Caco-2 (cell line): ENCODE measurements at regions of chr16 and their contacts with region 1.

Region 1: DNA sequence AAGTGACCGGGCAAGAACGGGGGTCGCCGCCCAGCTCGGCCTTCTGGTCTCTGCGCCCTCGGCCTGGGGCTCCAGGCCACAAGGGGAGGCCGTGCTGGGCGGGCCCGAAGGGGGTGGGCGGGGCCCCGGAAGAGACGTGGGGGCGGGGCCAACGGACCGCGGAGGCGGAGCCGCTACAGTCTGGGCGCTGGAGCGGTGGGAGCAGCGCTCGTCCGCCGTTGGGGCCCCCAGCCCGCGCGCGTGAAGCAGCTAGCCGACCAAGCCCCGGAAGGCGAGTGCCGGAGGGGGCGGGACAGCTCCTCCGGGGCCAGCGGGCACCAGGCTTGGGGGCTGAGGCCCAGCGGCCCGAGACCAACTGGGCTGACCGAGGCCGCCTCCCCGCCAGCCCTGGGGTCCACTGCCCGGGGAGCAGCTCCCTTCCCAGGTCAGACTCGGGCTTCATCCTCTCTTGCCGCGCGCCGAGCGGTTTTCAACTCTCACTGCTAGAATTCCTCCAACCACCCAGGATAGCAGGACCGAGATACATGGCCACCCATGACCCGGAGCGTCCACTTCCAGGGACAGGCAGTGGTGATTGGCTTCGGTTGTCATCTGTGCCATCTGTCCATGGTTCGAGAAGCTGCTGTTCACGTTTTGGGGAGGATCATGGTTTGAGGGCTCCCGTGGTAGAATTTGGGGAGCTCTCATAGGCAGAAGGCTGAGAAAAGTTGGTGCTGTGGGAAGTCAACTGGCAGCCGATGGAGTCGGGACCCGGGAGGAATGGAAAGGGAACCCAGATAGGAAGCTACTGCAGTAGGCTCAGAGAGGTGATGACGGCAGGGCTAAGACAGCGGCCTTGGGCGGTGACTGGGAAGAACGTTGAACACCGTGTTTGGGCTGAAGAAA is 44.6 kb upstream of the LCMT1 start:
- DNase-seq: peak; percentile 80 to 86
- H3K4me3 ChIP-seq: peak overlapping the region; percentile 54
- H3K4me3 Mint-ChIP-seq: peak overlapping the region; percentile 96
- H3K27ac Mint-ChIP-seq: peak overlapping the region; percentile 91
- H3K4me1 ChIP-seq: peaks cover 24% of the 10 kb centered on the region
- H3K4me1 Mint-ChIP-seq: peaks cover 18% of the 10 kb centered on the region
- H3K27me3 ChIP-seq: no peaks in the 10 kb centered on the region
- H3K27me3 Mint-ChIP-seq: no peaks in the 10 kb centered on the region
- CTCF ChIP-seq: no peak

Region 2: DNA sequence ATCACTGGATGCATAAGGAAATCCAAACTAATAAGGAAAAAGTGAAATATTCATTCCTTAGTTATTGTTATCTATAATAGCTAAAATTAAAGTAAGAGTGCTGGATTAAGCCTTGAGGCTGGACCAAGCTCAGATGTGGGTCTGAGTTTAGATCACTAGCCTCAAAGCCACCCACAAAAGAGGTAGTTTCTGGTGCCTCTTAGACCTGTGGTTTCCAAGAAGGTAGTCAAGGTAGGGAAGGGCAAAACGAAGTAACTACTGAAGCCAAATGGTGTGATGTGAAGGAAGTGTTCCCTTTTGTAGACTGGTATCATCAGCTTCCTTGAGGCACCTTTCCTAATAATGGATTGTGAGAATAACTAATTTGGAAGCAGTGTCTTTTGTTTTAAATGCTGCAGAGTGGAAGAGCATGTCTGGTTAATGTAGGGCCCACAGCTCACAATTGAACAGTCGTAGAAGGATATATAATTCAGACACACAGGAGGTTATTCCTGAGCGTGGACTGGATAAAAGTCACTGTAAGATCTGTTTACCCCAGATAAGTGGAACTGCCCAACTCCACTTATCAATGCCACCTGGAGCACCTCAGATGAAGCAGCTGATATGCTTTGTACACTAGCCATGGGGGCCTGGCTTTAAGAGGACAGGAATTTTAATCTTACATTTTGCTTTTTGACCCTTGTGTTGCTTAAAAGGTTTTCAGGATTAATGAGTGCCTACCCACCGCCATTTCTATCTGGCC is 12.8 kb after region 1 on chr16:
- CTCF ChIA-PET with region 1: interaction called, 4 read pairs
- POLR2A ChIA-PET with region 1: interaction called, 10 read pairs
- intact Hi-C with region 1: no loop called
- DNase-seq: no peak
- H3K4me3 ChIP-seq: no peak overlapping the region
- H3K4me3 Mint-ChIP-seq: no peak overlapping the region
- H3K27ac Mint-ChIP-seq: no peak overlapping the region
- H3K4me1 ChIP-seq: peaks cover 24% of the 10 kb centered on the region
- H3K4me1 Mint-ChIP-seq: peaks cover 8% of the 10 kb centered on the region
- H3K27me3 ChIP-seq: no peaks in the 10 kb centered on the region
- H3K27me3 Mint-ChIP-seq: no peaks in the 10 kb centered on the region
- CTCF ChIP-seq: no peak

Region 3: DNA sequence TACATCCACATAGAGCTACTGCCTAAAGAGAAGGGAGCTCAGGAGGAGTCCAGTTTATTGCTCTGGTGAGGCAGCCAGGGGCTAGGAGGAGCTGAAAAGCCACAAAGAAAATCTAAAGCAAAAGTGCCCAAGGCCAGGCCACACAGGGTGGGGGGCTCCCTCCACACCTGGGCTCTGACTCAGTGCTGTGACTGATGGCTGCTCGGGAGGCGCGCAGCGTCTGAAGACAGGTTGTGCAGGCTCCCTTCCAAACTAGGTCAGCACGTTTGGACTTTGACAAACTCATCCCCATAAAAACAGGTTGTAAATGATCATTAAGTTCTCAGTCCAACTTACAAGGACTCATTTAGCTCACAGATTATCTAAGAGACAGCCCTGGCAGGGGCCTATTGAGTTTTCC is 22.4 kb after region 1 on chr16:
- CTCF ChIA-PET with region 1: interaction called, 5 read pairs
- POLR2A ChIA-PET with region 1: interaction called, 20 read pairs
- intact Hi-C with region 1: no loop called
- DNase-seq: peak; percentile 74 to 81
- H3K4me3 ChIP-seq: no peak overlapping the region
- H3K4me3 Mint-ChIP-seq: peak overlapping the region; percentile 37
- H3K27ac Mint-ChIP-seq: peak overlapping the region; percentile 62
- H3K4me1 ChIP-seq: peaks cover 10% of the 10 kb centered on the region
- H3K4me1 Mint-ChIP-seq: peaks cover 7% of the 10 kb centered on the region
- H3K27me3 ChIP-seq: no peaks in the 10 kb centered on the region
- H3K27me3 Mint-ChIP-seq: no peaks in the 10 kb centered on the region
- CTCF ChIP-seq: no peak

Region 4: GRCh38 chr16:25100511-25100910 is 33.5 kb after region 1 on chr16:
- CTCF ChIA-PET with region 1: no interaction called
- POLR2A ChIA-PET with region 1: no interaction called
- intact Hi-C with region 1: no loop called
- DNase-seq: no peak
- H3K4me3 ChIP-seq: no peak overlapping the region
- H3K4me3 Mint-ChIP-seq: no peak overlapping the region
- H3K27ac Mint-ChIP-seq: no peak overlapping the region
- H3K4me1 ChIP-seq: 0 out of 2 replicates have a peak, but pooled peaks cover 6% of the 10 kb centered on the region
- H3K4me1 Mint-ChIP-seq: no peaks in the 10 kb centered on the region
- H3K27me3 ChIP-seq: no peaks in the 10 kb centered on the region
- H3K27me3 Mint-ChIP-seq: no peaks in the 10 kb centered on the region
- CTCF ChIP-seq: no peak